A673 (cell line): ENCODE measurements at regions of chr12 and their contacts with region 1.

Region 1: DNA sequence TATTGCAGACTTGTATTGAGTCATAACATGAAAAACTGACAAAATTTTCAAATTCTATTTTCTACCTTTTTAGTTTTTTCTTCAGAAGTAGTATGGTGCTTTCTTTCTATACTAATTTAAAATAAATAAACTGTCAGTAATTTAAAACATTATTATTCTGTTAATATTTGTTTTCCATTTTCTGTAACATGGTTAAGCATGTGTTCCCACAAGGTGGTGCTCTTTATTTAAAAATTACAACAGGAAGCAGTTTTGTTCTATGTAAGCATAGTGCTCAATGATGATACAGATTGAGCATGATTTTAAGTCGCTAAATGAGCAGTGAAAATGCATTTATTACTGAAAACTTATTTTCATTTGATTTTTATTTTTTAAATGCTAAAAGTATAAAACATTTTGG is 114.6 kb downstream of the PPFIA2 start:
- DNase-seq: peak; percentile 65
- H3K4me3 ChIP-seq: no peak overlapping the region
- H3K27ac ChIP-seq: no peak overlapping the region
- H3K4me1 ChIP-seq: no peaks in the 10 kb centered on the region
- H3K27me3 ChIP-seq: no peaks in the 10 kb centered on the region
- CTCF ChIP-seq: peak; percentile 70

Region 2: DNA sequence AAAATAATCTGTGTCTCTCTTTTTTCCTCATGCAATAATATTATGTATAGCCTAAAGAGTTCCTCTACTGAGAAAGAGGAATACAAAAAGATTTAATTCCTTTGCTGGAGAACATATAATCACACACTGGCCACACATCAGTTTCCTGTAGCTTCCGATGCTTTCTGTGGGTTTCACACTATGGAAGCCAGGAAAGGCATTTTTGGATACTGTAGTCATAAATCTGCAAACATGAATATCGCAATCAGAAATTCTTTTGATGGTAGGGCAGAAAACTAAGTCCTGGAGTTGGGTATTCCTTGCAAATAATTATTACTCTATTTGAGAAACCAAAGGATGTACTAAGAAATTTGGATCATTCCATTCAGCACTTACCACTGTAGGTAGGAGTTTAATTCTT is 306.6 kb before region 1 on chr12:
- CTCF ChIA-PET with region 1: no interaction called
- POLR2A ChIA-PET with region 1: no interaction called
- intact Hi-C with region 1: no loop called
- DNase-seq: no peak
- H3K4me3 ChIP-seq: no peak overlapping the region
- H3K27ac ChIP-seq: no peak overlapping the region
- H3K4me1 ChIP-seq: no peaks in the 10 kb centered on the region
- H3K27me3 ChIP-seq: no peaks in the 10 kb centered on the region
- CTCF ChIP-seq: no peak

Region 3: DNA sequence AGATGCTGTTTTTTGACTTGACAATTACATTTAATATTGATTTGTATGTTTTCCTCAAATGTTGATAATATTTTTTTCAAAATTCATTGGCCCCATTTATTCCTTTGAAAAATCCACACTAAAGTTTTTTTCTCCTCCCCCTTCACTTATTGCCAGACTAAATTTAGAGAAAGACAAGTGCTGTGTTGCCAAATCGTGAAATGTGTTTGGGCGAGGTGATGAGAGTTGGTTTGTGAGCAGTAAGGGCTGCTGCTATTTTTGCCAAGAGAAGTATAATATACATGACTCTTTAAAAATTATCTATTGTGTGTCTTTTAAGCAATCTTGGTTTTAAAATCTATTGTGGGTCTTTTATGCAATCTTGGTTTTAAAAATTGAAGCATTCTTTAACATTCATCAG is 74.3 kb before region 1 on chr12:
- CTCF ChIA-PET with region 1: no interaction called
- POLR2A ChIA-PET with region 1: no interaction called
- intact Hi-C with region 1: no loop called
- DNase-seq: no peak
- H3K4me3 ChIP-seq: no peak overlapping the region
- H3K27ac ChIP-seq: no peak overlapping the region
- H3K4me1 ChIP-seq: no peaks in the 10 kb centered on the region
- H3K27me3 ChIP-seq: no peaks in the 10 kb centered on the region
- CTCF ChIP-seq: no peak

Region 4: DNA sequence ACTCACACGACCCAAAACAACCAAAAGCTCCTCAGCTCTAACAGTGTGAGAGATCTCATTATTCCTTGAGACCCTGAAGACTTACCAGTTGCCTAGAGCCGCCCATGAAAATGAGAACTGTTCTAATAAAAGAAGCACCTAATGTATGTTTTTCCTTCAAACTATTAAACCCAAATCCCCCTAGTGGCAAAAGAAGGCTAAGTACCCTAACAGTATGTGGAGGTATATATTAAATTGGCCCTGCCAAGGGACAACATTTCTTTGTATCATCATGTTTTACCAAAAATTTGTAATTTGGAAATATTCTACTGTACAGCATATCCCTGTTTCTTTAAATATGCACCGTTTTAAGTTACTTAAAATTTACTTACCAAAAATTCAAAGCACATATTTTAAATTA is 152.6 kb after region 1 on chr12:
- CTCF ChIA-PET with region 1: no interaction called
- POLR2A ChIA-PET with region 1: no interaction called
- intact Hi-C with region 1: loop called (anchors 10 kb)
- DNase-seq: peak; percentile 56
- H3K4me3 ChIP-seq: no peak overlapping the region
- H3K27ac ChIP-seq: no peak overlapping the region
- H3K4me1 ChIP-seq: no peaks in the 10 kb centered on the region
- H3K27me3 ChIP-seq: peaks cover 20% of the 10 kb centered on the region
- CTCF ChIP-seq: peak; percentile 57

Region 5: DNA sequence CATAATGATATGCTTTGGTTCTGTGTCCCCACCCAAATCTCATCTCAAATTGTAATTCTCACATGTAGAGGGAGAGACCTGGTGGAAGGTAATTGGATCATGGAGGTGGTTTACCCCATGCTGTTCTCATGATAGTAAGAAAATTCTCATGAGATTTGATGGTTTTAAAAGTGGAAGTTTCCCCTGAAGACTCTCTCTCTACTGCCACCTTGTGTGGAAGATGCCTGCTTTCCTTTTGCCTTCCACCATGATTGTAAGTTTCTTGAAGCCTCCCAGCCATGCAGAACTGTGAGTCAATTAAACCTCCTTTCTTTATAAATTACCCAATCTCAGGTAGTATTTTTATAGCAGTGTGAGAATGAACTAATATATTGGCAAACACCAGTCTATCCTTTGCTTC is 375.0 kb after region 1 on chr12:
- CTCF ChIA-PET with region 1: no interaction called
- POLR2A ChIA-PET with region 1: no interaction called
- intact Hi-C with region 1: loop called (anchors 10 kb)
- DNase-seq: peak; percentile 9
- H3K4me3 ChIP-seq: no peak overlapping the region
- H3K27ac ChIP-seq: no peak overlapping the region
- H3K4me1 ChIP-seq: no peaks in the 10 kb centered on the region
- H3K27me3 ChIP-seq: no peaks in the 10 kb centered on the region
- CTCF ChIP-seq: peak; percentile 44

Region 6: DNA sequence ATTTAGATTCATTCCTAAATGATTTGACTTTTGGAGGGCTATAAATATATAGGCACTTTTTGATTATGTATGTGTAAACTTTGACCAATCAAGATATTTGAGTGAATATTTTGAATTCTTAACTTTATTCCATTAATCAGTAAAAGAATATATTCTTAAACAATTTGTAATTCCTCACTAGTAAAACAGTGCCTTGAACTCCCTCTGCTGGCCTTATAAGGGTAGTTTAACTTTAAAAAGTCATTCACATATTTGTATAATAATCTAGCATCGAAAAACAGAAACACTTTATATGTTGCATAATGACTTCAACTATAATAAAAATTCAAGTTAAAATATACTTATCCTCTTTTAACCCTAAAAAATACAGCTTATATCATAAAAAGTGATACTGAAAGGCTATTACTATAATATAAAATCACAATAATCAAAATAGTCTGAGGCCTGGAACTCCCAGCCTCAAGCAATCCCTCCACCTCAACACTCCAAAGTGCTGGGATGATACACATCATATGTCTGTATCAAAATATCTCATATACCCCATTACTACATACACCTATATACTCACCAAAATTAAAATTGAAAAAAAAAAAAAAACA is 682.5 kb after region 1 on chr12:
- CTCF ChIA-PET with region 1: no interaction called
- POLR2A ChIA-PET with region 1: no interaction called
- intact Hi-C with region 1: loop called (anchors 1 kb)
- DNase-seq: peak; percentile 38
- H3K4me3 ChIP-seq: no peak overlapping the region
- H3K27ac ChIP-seq: no peak overlapping the region
- H3K4me1 ChIP-seq: peaks cover 12% of the 10 kb centered on the region
- H3K27me3 ChIP-seq: no peaks in the 10 kb centered on the region
- CTCF ChIP-seq: peak; percentile 68

Region 7: DNA sequence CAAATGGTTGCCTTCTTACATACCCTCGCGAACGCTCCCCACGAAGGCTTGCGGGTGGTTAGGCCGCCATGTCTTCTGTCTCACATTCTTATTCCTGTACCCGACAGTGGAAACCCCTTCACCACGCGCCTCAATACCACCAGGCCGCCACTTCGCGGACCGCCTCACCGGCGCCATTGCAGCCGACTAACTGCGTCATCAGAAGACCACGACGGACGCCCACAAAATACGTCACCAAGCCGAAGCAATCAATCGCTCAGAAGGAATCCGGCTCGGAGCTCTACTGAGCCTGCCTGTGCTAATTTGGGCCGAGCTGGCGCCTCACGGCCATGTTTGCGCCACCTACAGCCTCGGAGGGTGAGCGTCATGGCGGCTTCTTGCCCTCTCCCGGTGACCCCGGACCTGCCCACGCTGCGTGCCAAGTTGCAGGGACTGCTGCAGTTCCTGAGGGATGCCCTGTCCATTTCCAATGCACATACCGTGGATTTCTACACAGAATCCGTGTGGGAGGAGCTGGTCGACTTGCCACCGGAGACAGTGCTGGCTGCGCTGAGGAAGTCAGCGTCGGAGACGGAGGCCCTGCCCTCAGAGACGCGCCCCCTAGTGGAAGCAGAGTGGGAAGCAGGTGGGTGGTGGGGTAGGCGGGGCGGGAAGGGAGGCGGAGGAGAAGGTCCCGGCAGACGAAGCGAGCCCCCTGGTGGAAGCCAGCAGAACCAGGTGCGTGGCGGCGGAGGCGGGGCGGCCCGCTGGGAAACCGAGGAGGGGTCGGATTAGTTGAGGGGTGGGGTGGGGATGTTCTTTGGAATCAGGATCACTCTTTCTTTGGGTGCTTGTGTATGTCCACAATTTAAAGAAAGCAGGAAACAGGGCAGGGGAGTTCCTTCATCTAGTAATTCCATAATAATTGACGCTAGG is 714.0 kb after region 1 on chr12 and contains the starts of genes CCDC59 and METTL25:
- CTCF ChIA-PET with region 1: no interaction called
- POLR2A ChIA-PET with region 1: no interaction called
- intact Hi-C with region 1: loop called (anchors 1 kb)
- DNase-seq: peak; percentile 98
- H3K4me3 ChIP-seq: peak within 1 kb of the TSS; percentile 67
- H3K27ac ChIP-seq: peak within 1 kb of the TSS; percentile 97
- H3K4me1 ChIP-seq: peaks cover 23% of the 10 kb centered on the region
- H3K27me3 ChIP-seq: no peaks in the 10 kb centered on the region
- CTCF ChIP-seq: peak; percentile 100
- total RNA-seq, gene CCDC59: 74.9 and 83.1 TPM in 2 replicates
- total RNA-seq, gene METTL25: 3.1 and 5.1 TPM in 2 replicates

Region 8: DNA sequence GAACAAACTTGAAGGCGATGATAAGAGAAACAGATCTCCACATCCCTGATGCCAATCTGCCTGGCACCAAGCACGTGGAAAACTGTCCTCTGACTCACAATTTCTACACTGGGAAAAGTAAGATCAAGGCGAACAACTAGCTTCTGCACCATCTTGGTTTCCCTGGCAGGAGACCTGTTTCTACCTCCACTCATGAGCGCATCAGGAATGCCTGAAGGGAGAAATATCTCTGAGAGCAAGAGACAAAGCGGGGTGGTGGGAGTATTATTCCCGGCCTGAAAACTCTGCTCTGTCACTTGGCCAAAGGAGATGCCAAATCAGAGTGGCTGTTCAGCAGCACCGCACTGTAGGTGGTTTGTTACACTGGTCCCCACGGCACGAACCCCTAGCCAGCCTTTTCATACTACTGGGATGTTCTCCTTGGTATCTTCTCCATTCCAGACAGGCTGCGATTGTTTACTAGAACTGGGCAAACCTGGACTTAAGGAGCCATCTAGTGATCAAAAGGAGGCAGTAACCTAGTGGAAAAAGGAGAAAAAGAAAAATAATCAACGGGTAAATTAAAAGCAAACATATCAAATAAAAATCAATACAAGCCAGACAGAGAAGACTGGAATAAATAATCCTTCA is 983.2 kb after region 1 on chr12:
- CTCF ChIA-PET with region 1: no interaction called
- POLR2A ChIA-PET with region 1: no interaction called
- intact Hi-C with region 1: loop called (anchors 5 kb)
- DNase-seq: peak; percentile 45
- H3K4me3 ChIP-seq: no peak overlapping the region
- H3K27ac ChIP-seq: no peak overlapping the region
- H3K4me1 ChIP-seq: no peaks in the 10 kb centered on the region
- H3K27me3 ChIP-seq: no peaks in the 10 kb centered on the region
- CTCF ChIP-seq: peak; percentile 59